ENCODE measurements at regions of chr4 and their contacts with region 1.

Region 1: DNA sequence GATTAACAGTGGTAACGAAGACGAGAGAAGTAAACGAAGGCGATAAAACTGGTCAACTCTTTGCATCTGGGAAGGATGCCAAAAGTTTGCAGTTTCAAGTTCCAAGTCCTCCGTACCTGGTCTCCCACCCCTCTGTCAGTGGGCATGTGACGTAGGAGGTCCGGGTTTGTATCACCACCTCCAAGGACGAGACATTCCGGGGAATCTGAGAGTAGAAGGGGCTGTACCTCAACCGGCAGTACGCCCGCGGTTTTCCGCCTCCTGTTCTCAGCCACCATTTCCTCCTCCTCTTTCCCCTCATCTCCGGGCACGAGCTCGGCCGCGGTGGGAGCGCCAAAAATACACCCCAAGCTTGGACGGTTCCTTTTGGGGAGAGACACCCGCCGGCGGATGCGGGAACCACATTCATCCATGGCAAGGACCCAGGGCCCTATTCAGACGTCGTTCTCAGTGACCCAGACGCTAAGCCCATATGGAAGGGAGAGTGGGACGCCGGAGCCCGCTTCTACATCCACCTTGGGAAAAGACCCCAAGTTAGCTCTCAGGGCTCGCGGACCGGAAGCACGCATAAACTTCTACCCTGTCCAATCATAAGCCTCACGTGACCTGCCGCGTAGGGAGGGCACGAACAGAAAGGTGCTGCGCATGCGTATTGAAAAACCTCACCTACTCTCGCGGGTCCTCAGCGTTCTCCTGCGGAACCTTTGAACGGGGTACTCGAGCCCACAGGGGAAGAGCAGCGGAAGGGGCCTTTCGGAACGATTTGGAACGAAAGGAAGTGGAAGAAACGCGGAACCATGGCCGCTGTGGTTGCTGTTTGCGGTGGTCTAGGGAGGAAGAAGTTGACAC is at the starts of genes HELQ and MRPS18C:
- DNase-seq: peak; percentile 97
- ATAC-seq: peak; percentile 93
- H3K4me3 ChIP-seq: peak within 1 kb of the TSS; percentile 88
- H3K27ac ChIP-seq: peak within 1 kb of the TSS; percentile 73
- H3K4me1 ChIP-seq: peaks cover 11% of the 10 kb centered on the region
- H3K27me3 ChIP-seq: no peaks in the 10 kb centered on the region
- CTCF ChIP-seq: no peak; the same call in 1 of the 2 replicates
- total RNA-seq, gene HELQ: 7.3 and 10.5 TPM in 2 replicates
- total RNA-seq, gene MRPS18C: 54.4 and 57.6 TPM in 2 replicates

Region 2: GRCh38 chr4:82677321-82677720 is 778.2 kb before region 1 on chr4:
- CTCF ChIA-PET with region 1: no interaction called
- POLR2A ChIA-PET with region 1: no interaction called
- intact Hi-C with region 1: no loop called
- DNase-seq: peak; percentile 50
- ATAC-seq: 0 out of 2 replicates have a peak, but pooled peaks have one; percentile 18
- H3K4me3 ChIP-seq: no peak overlapping the region
- H3K27ac ChIP-seq: no peak overlapping the region
- H3K4me1 ChIP-seq: peaks cover 10% of the 10 kb centered on the region; the same call in 1 of the 2 replicates
- H3K27me3 ChIP-seq: no peaks in the 10 kb centered on the region
- CTCF ChIP-seq: no peak

Region 3: DNA sequence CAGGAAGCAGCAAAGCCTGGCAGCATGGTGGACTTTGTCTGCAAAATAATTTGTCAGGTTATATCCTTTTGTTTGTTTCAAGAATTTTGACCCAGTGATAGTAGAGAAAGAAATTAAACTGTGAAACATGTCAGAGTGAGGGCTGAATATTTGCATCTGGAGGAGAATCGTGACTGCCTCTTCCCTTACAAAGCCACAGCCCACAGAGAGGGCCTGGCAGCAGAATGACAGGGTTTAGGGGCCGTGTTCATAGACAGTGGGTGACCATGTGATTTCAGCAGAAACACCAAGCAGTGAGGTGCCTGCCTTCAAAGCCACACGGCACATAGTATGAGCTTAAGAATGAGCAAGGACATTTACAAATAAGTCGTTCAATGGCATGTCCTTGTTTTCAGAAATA is 316.6 kb before region 1 on chr4:
- CTCF ChIA-PET with region 1: no interaction called
- POLR2A ChIA-PET with region 1: no interaction called
- intact Hi-C with region 1: no loop called
- DNase-seq: no peak
- ATAC-seq: no peak
- H3K4me3 ChIP-seq: no peak overlapping the region
- H3K27ac ChIP-seq: no peak overlapping the region
- H3K4me1 ChIP-seq: no peaks in the 10 kb centered on the region
- H3K27me3 ChIP-seq: no peaks in the 10 kb centered on the region
- CTCF ChIP-seq: no peak

Region 4: GRCh38 chr4:83369831-83370639 is 85.5 kb before region 1 on chr4:
- CTCF ChIA-PET with region 1: no interaction called
- POLR2A ChIA-PET with region 1: no interaction called
- intact Hi-C with region 1: no loop called
- DNase-seq: no peak
- ATAC-seq: no peak
- H3K4me3 ChIP-seq: no peak overlapping the region
- H3K27ac ChIP-seq: no peak overlapping the region
- H3K4me1 ChIP-seq: no peaks in the 10 kb centered on the region
- H3K27me3 ChIP-seq: no peaks in the 10 kb centered on the region
- CTCF ChIP-seq: no peak

Region 5: GRCh38 chr4:83473423-83473822 is 17.9 kb after region 1 on chr4:
- CTCF ChIA-PET with region 1: no interaction called
- POLR2A ChIA-PET with region 1: interaction called, 10 read pairs
- intact Hi-C with region 1: no loop called
- DNase-seq: no peak
- ATAC-seq: no peak
- H3K4me3 ChIP-seq: no peak overlapping the region
- H3K27ac ChIP-seq: no peak overlapping the region
- H3K4me1 ChIP-seq: no peaks in the 10 kb centered on the region
- H3K27me3 ChIP-seq: no peaks in the 10 kb centered on the region
- CTCF ChIP-seq: no peak

Measured in PC-3 (cell line).